ENCODE measurements at regions of chr2 and their contacts with region 1.

Region 1: GRCh38 chr2:105521205-105521604 is 122.4 kb upstream of the FHL2 start:
- DNase-seq: no peak
- H3K4me3 ChIP-seq: no peak overlapping the region
- CTCF ChIP-seq: no peak

Region 2: DNA sequence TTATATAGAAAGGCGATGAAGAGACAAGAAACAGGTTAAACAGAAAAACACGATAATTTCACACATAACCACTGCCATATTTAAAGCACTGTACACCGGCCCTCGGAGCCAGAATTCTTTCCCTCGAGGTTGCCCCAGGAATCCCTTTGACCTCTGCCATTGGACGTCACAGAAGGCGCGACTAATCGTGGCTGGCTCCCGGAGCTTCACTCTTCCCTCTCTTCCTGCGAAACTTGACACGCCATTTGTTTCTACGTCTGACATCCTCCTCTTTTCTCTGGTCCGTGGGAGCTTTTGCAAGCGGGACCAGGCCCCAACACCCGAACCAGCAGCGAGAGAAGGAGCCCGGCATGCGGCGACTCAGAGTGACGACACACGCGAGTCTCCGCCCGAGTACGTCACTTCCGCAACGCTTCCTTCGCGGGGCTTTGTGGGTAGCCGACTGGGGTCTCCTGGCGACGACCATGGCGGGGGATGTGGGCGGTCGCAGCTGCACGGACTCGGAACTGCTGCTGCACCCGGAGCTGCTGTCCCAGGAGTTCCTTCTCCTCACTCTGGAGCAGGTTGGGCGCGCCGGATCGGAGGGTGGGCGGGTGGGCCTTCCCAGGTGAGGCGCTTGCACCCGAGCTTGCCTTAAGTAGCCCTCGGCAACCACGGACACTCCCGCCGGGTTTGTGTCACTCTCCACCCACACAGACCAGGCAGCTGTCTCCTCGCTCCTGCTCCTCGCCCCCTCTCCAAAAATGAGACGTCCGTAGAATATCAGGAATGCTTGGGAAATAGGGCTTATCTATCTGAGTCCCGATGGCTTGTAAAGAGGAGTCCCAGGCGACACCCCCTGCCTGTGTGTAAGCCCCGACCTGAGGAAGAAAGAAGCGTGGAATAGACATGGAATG is 183.8 kb before region 1 on chr2 and contains the start of gene C2orf49:
- CTCF ChIA-PET with region 1: interaction called, 476 read pairs
- POLR2A ChIA-PET with region 1: no interaction called
- DNase-seq: no peak
- H3K4me3 ChIP-seq: peak within 1 kb of the TSS; percentile 90
- CTCF ChIP-seq: no peak

Region 3: GRCh38 chr2:105369747-105370690 is 151.2 kb before region 1 on chr2:
- CTCF ChIA-PET with region 1: interaction called, 167 read pairs
- POLR2A ChIA-PET with region 1: interaction called, 3 read pairs
- DNase-seq: no peak
- H3K4me3 ChIP-seq: no peak overlapping the region
- CTCF ChIP-seq: peak; percentile 87

Region 4: GRCh38 chr2:105403785-105404698 is 117.2 kb before region 1 on chr2:
- CTCF ChIA-PET with region 1: interaction called, 328 read pairs
- POLR2A ChIA-PET with region 1: no interaction called
- DNase-seq: peak; percentile 94
- H3K4me3 ChIP-seq: no peak overlapping the region
- CTCF ChIP-seq: peak; percentile 63

Region 5: GRCh38 chr2:105454801-105455485 is 66.3 kb before region 1 on chr2:
- CTCF ChIA-PET with region 1: interaction called, 11 read pairs
- POLR2A ChIA-PET with region 1: no interaction called
- DNase-seq: peak; percentile 53
- H3K4me3 ChIP-seq: no peak overlapping the region
- CTCF ChIP-seq: peak; percentile 52

Region 6: GRCh38 chr2:105537466-105537865 is 16.3 kb after region 1 on chr2:
- CTCF ChIA-PET with region 1: interaction called, 26 read pairs
- POLR2A ChIA-PET with region 1: no interaction called
- DNase-seq: no peak
- H3K4me3 ChIP-seq: no peak overlapping the region
- CTCF ChIP-seq: no peak

Region 7: DNA sequence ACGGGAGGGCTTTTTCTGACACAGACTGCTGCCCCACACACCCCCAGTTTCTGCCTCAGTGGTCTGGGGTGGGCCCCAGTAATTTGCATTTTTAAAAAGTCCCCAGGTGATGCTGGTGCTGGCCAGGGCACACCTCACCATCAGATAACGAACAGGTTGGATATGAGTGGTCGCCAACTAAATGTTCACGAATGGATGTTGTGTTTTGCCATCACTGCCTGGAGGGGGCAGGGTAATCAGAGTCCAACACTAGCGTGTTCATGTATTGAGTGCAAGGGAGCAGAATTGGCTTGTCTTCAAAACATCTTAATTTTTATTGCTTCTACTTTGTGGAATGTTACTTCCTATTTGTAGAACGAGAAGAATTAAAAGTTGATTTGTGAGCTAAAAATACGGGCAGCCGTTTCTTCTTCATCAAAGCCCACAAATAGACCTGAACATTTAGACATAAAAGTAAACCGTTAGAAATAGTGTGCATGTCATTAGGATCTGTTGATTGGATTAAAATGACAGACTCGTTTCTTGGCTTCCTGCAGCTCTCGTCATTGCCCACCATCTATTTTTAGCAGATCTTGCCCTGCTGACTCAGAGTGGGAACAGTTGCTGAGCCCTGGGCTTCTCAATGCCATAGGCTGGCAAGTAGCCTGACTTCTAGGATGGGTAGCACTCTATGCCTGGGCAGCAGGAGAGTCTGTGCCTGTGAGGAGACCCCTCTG is 268.7 kb after region 1 on chr2:
- CTCF ChIA-PET with region 1: no interaction called
- POLR2A ChIA-PET with region 1: no interaction called
- DNase-seq: peak; percentile 52
- H3K4me3 ChIP-seq: no peak overlapping the region
- CTCF ChIP-seq: peak; percentile 32

Region 8: GRCh38 chr2:106282462-106283202 is 761.4 kb after region 1 on chr2:
- CTCF ChIA-PET with region 1: no interaction called
- POLR2A ChIA-PET with region 1: no interaction called
- DNase-seq: no peak
- H3K4me3 ChIP-seq: no peak overlapping the region
- CTCF ChIP-seq: no peak

Measured in AG04449 (cell line).